ENCODE measurements at regions of chr12 and their contacts with region 1.

Region 1: GRCh38 chr12:48936379-48936979 is 11.2 kb upstream of the FKBP11 start:
- DNase-seq: peak; percentile 63
- H3K4me3 Mint-ChIP-seq: no peak overlapping the region
- H3K27ac Mint-ChIP-seq: no peak overlapping the region
- H3K4me1 Mint-ChIP-seq: peaks cover 41% of the 10 kb centered on the region
- H3K27me3 Mint-ChIP-seq: no peaks in the 10 kb centered on the region

Region 2: DNA sequence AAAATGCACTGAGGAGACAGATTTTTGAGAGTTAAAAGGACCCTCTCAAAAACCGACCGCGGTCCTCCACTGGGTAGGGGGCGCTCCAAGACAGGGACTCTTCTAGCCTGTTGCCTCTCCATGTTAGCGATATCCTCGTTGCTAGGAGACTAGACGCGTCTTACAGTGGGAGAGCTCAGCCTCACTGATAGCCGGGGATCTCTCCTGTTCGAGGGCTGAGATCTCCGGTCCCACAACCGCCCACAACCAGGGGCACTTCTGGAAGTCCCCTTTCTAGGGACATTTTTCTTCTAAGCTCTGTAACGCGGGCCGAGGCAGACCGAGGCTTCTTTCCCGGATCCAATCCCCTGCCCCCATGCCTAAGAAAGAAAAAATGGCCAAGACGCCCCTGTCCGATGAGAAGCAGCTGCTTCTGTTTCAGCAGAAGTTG is 32.5 kb before region 1 on chr12:
- intact Hi-C with region 1: loop called (anchors 1 kb)
- DNase-seq: peak; percentile 70
- H3K4me3 Mint-ChIP-seq: peak overlapping the region; percentile 68
- H3K27ac Mint-ChIP-seq: peak overlapping the region; percentile 71
- H3K4me1 Mint-ChIP-seq: peaks cover 14% of the 10 kb centered on the region
- H3K27me3 Mint-ChIP-seq: peaks cover 8% of the 10 kb centered on the region

Region 3: GRCh38 chr12:48924617-48925303 is 11.7 kb before region 1 on chr12:
- intact Hi-C with region 1: loop called (anchors 1 kb)
- DNase-seq: peak; percentile 38
- H3K4me3 Mint-ChIP-seq: peak overlapping the region; percentile 89
- H3K27ac Mint-ChIP-seq: peak overlapping the region; percentile 81
- H3K4me1 Mint-ChIP-seq: peaks cover 47% of the 10 kb centered on the region
- H3K27me3 Mint-ChIP-seq: no peaks in the 10 kb centered on the region

Region 4: DNA sequence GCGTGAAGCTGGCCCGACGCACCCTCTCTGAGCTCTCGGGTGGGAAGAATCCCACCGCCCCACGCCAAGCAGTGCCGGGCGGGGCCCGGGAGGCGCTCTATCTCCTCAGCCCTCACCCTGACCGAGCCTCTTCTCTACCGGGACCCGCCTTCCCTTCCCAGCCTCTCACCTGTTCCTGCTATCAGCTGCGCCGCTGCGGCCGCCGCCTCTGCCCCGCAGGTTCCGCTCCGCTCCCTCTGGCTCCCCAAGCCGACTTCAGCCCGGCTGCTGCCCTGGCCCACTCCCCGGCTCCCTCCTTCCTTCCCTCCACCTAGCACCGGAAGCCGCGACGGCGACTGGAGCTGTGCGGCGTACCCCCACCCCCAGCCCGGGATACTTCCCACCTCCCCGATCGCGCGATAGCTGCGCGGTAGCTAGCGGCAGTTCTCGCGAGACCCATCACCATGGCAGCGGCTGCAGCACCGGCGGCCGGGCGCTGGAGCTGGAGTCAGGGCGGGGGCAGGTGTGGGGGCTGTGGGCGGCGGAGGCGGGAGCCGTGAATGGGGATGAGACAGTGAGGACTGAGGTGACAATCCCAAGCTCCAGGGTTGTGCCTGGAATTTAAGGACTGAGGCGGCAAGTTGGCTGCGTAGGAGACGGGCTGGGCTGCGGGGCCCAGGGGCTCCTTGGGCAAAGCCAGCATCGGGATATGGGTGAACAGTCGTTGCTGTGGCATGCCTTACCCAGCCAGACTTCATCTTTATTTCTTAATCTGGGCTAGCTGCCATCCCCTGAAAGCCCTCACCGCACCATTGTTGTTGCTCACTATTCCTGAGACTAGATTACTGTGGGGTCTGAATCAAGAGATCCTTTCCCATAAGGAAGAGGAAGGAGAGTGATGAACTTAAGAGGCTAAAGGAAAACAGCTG is 20.9 kb after region 1 on chr12 and contains the start of gene ARF3:
- intact Hi-C with region 1: loop called (anchors 2 kb)
- DNase-seq: peak; percentile 91
- H3K4me3 Mint-ChIP-seq: peak within 1 kb of the TSS; percentile 94
- H3K27ac Mint-ChIP-seq: peak within 1 kb of the TSS; percentile 94
- H3K4me1 Mint-ChIP-seq: peaks cover 46% of the 10 kb centered on the region
- H3K27me3 Mint-ChIP-seq: peaks cover 33% of the 10 kb centered on the region
- total RNA-seq, gene ARF3: 116 and 117 TPM in 2 replicates

Region 5: DNA sequence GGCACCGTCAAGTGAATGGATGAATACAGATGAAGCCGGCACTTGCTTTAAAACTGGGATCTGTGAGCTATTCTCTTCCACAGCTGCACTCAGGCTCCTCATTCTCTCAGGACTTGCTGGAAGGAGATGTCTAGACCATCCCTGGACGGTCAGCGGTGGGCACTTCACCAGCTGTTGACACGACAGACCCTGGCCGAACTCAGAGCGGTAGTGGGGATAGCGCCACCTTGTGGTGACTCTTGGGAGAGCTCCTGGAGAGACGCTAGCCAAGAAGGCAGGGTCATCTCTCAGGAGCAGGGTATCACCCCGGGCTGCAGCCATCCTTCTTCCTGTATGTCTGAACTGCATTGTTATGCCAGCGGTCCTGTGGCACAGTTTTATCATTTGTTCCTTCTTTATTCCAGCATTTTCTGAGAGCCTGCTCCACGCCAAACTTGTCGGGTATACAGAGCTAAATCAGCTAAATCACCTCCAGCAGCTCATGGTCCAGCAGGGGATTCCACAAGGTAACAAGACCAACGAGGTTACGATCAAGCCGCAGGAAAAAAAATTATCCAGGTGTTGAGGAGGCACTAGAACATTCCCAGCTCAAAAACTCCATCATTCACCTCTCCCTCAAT is 51.7 kb after region 1 on chr12:
- intact Hi-C with region 1: loop called (anchors 2 kb)
- DNase-seq: peak; percentile 59
- H3K4me3 Mint-ChIP-seq: no peak overlapping the region
- H3K27ac Mint-ChIP-seq: no peak overlapping the region
- H3K4me1 Mint-ChIP-seq: peaks cover 10% of the 10 kb centered on the region
- H3K27me3 Mint-ChIP-seq: peaks cover 76% of the 10 kb centered on the region

Region 6: DNA sequence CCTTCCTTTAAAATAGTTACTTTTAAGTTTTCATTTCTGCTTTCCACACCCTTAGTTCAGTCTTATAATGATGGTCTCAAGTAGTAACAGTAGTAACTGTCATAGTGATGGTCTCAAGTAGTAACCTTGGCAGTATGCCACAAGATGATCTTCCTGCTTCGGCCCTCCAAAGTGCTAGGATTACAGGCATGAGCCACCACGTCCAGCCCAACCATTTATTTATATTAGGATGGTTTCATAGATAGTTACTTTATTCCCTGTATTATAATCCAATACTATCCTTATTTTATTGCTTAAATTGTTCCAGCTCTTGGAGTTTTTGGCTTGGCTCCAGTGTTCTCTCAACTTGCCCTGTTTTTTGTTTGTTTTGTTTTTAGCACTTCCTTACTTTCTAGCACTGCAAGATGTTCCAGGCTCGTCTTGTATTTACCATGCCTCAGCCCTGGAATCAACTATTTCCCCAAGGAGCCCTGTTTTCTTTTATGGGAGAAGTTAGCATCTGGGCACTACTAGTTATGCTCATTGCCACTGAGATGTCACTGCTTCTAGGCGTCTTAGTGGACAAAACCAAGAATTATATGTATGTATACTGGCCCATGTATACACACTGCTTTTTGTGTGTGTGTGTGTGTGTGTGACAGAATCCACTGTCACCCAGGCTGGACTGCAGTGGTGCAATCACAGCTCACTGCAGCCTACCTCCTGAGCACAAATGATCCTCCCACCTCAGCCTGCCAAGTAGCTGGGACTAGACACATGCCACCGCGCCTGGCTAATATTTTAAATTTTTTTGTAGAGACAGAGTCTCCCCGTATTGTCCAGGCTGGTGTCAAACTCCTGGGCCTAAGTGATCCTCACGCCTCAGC is 1321.4 kb after region 1 on chr12:
- intact Hi-C with region 1: no loop called
- DNase-seq: no peak
- H3K4me3 Mint-ChIP-seq: no peak overlapping the region
- H3K27ac Mint-ChIP-seq: no peak overlapping the region
- H3K4me1 Mint-ChIP-seq: peaks cover 8% of the 10 kb centered on the region
- H3K27me3 Mint-ChIP-seq: peaks cover 1% of the 10 kb centered on the region